PC-3 (cell line): ENCODE measurements at regions of chr17 and their contacts with region 1.

Region 1: GRCh38 chr17:60036796-60037612 is 41.7 kb downstream of the HEATR6 start:
- DNase-seq: peak; percentile 88
- ATAC-seq: peak; percentile 97
- H3K4me3 ChIP-seq: 0 out of 2 replicates have a peak overlapping the region, but pooled peaks have one; percentile 1
- H3K27ac ChIP-seq: no peak overlapping the region
- H3K4me1 ChIP-seq: no peaks in the 10 kb centered on the region
- H3K27me3 ChIP-seq: no peaks in the 10 kb centered on the region
- CTCF ChIP-seq: peak; percentile 99

Region 2: DNA sequence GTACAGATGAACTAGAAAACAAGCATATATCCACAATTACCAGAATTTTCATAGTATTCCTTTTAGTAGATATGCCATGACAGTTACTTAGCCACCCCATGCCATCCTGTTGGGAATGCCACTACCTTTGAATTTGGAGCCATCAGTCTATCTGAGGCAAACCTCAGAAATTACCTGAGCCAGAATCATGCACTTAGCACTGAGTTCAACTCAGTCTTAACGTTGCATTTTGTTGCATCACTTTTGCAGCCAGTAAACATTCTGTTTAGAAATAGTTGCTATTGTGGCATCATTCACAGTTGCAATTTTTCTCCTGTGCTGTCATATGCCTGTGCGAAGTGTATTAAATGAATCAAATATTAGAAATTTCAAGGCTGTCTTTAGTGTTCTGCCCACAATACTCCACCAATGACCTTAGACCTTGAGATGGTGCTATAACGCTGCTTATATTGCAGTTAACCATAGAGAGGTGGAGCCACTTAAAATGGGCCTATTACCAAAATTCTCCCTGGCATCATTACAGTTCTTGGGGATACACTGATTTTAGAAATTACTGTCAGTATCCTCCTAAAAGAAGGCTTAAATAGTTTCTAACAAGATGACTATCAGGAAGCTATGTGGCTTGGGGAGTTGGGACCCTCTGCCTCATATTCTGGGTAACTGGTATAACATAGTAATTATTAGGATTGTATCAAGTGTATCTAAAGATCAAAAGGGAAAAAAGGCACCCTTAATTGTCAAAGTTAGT is 340.9 kb before region 1 on chr17:
- CTCF ChIA-PET with region 1: no interaction called
- POLR2A ChIA-PET with region 1: no interaction called
- intact Hi-C with region 1: loop called (anchors 10 kb)
- DNase-seq: no peak
- ATAC-seq: peak; percentile 17; the same call in 1 of the 2 replicates
- H3K4me3 ChIP-seq: no peak overlapping the region
- H3K27ac ChIP-seq: no peak overlapping the region
- H3K4me1 ChIP-seq: no peaks in the 10 kb centered on the region
- H3K27me3 ChIP-seq: no peaks in the 10 kb centered on the region
- CTCF ChIP-seq: no peak

Region 3: DNA sequence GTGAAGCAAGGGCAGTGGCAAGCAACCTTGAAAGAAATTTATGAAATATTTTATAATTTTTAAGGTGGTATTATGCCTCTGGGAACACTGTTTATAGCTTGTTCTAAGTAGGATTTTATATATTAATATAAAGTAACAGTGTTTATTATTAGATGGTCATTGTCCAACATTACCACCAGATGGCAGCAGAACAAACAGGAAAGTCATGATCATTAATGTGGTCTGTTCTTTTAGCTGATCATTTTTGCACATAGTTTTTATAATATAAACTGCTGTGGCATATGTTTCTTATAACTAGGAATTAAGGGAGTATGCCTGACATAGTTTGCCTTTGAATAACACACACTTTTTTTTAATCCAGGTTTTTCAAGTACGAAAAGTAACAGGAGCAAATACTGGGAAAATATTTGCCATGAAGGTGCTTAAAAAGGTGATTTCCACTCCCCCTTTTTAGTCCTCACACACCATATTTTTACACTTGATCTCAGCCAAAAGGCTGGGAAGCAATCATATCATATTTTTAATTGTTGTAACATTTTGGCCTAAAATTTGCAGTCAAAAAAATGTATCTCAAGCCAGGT is 122.6 kb before region 1 on chr17:
- CTCF ChIA-PET with region 1: interaction called, 12 read pairs
- POLR2A ChIA-PET with region 1: no interaction called
- intact Hi-C with region 1: loop called (anchors 10 kb)
- DNase-seq: peak; percentile 70
- ATAC-seq: peak; percentile 72
- H3K4me3 ChIP-seq: no peak overlapping the region
- H3K27ac ChIP-seq: no peak overlapping the region
- H3K4me1 ChIP-seq: no peaks in the 10 kb centered on the region
- H3K27me3 ChIP-seq: no peaks in the 10 kb centered on the region
- CTCF ChIP-seq: peak; percentile 77

Region 4: GRCh38 chr17:59964482-59965328 is 72.3 kb before region 1 on chr17 and contains the start of gene RNFT1:
- CTCF ChIA-PET with region 1: interaction called, 6 read pairs
- POLR2A ChIA-PET with region 1: interaction called, 13 read pairs
- intact Hi-C with region 1: no loop called
- DNase-seq: peak; percentile 93
- ATAC-seq: peak; percentile 81
- H3K4me3 ChIP-seq: peak within 1 kb of the TSS; percentile 92
- H3K27ac ChIP-seq: peak within 1 kb of the TSS; percentile 77
- H3K4me1 ChIP-seq: peaks cover 17% of the 10 kb centered on the region
- H3K27me3 ChIP-seq: no peaks in the 10 kb centered on the region
- CTCF ChIP-seq: no peak
- total RNA-seq, gene RNFT1: 13.5 and 18.1 TPM in 2 replicates